Left cardiac atrium (tissue), 4 donors: ENCODE measurements at regions of chr1 and their contacts with region 1.

Region 1: GRCh38 chr1:169106095-169106920 is at the start of gene ATP1B1:
- DNase-seq: peak; percentile 91
- ATAC-seq: peak; percentile 88 to 90
- total RNA-seq, gene ATP1B1: 177 to 272 TPM

Region 2: GRCh38 chr1:168613691-168614231 is 492.5 kb before region 1 on chr1:
- intact Hi-C with region 1: loop called in 1 of 2 experiments (anchors 10 kb)
- DNase-seq: peak; percentile 44
- ATAC-seq: peak; percentile 66 to 84

Region 3: GRCh38 chr1:168637350-168637991 is 468.8 kb before region 1 on chr1:
- intact Hi-C with region 1: loop called in 1 of 2 experiments (anchors 5 kb)
- DNase-seq: no peak
- ATAC-seq: peak in 1 of 2 donors; percentile 75

Region 4: GRCh38 chr1:168719306-168720111 is 386.8 kb before region 1 on chr1:
- intact Hi-C with region 1: loop called in 1 of 2 experiments (anchors 10 kb)
- DNase-seq: no peak
- ATAC-seq: peak in 1 of 2 donors; percentile 29

Region 5: DNA sequence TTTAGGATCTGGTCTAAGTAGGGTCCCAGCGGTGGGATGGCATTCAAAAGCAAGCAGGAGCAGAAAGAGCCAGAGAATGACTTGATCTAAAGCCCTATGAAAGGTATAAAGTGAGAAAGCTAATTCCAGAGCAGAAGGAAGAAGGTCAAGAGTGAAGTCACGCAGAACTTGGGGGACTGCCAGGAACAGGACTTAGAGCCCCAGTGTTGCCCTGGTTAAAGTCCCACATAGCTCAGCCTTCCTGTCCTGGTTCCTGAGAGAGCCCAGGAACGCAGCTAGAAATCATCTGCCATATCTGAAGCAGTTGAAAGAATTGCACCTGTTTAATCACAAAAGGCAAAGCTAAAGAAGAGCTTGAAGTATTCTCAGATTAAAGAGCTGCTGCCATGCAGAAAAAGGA is 160.4 kb before region 1 on chr1:
- intact Hi-C with region 1: loop called in 1 of 2 experiments (anchors 10 kb)
- DNase-seq: peak; percentile 74
- ATAC-seq: peak; percentile 90 to 91